IMR-90 (cell line): ENCODE measurements at regions of chr10 and their contacts with region 1.

Region 1: DNA sequence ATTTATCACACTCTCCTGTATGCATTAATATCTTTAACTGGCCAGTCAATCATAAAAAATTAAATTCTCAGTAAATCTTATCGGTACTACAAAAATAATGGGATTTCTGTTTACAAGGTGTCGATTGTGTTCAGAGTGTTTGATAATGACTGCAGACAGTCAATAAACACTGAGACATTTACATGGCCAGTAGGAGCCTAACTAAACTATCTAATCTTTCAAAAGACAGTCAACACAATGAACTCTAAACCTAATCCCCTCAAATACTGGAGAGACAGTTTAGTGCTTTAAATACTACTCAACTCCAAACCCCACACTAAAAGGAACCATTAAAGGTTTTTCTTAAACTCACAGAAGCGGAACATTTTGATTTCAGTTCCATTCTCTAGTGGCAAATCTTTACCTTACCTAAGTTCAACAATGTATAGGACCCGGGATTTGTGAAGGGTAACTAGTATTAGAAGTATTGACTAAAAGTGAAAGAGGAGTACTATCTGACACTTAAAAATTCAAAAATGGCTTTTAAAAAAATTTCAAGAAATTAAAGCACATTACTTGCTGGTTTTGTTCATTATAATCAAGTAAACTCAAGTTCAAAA is 37.3 kb upstream of the EXOC6 start:
- DNase-seq: no peak
- ATAC-seq: no peak
- H3K4me3 ChIP-seq: no peak overlapping the region
- H3K27ac ChIP-seq: no peak overlapping the region
- H3K4me1 ChIP-seq: peaks cover 6% of the 10 kb centered on the region
- H3K27me3 ChIP-seq: no peaks in the 10 kb centered on the region
- CTCF ChIP-seq: no peak
- POLR2A ChIP-seq: no peak
- RAD21 ChIP-seq: no peak

Region 2: GRCh38 chr10:91864099-91864498 is 946.9 kb before region 1 on chr10:
- CTCF ChIA-PET with region 1: no interaction called
- POLR2A ChIA-PET with region 1: no interaction called
- dilution Hi-C with region 1: no loop called
- in situ Hi-C with region 1: no loop called
- intact Hi-C with region 1: no loop called
- DNase-seq: no peak
- ATAC-seq: no peak; the same call in 1 of the 2 replicates
- H3K4me3 ChIP-seq: no peak overlapping the region
- H3K27ac ChIP-seq: no peak overlapping the region
- H3K4me1 ChIP-seq: peaks cover 4% of the 10 kb centered on the region
- H3K27me3 ChIP-seq: no peaks in the 10 kb centered on the region
- CTCF ChIP-seq: no peak
- POLR2A ChIP-seq: no peak
- RAD21 ChIP-seq: no peak

Region 3: DNA sequence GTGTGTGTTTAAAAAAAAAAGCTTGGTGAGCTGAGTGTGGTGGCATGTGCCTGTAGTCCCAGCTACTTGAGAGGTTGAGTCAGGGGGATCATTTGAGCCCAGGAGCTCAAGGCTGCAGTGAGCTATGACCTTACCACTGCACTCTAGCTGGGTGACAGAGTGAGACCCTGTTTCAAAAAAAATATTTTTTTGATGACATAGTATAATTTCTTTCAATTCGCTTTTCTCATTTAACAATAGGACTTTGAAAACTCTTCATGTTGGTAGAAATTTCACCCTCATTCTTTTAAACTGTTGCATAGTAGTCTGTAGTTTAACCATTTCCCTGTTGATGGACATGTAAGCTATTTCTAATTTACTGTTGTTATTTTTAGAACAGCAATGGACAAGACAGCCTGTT is 18.4 kb before region 1 on chr10:
- CTCF ChIA-PET with region 1: no interaction called
- POLR2A ChIA-PET with region 1: no interaction called
- dilution Hi-C with region 1: no loop called
- in situ Hi-C with region 1: no loop called
- intact Hi-C with region 1: loop called (anchors 2 kb)
- DNase-seq: no peak
- ATAC-seq: no peak
- H3K4me3 ChIP-seq: no peak overlapping the region
- H3K27ac ChIP-seq: no peak overlapping the region
- H3K4me1 ChIP-seq: no peaks in the 10 kb centered on the region
- H3K27me3 ChIP-seq: peaks cover 2% of the 10 kb centered on the region; the same call in 1 of the 2 replicates
- CTCF ChIP-seq: no peak
- POLR2A ChIP-seq: no peak
- RAD21 ChIP-seq: no peak